ENCODE measurements at regions of chr2 and their contacts with region 1.

Region 1: GRCh38 chr2:176001916-176002687 is at the start of gene LNPK:
- DNase-seq: peak; percentile 84 to 95 (median 92)
- ATAC-seq: peak; percentile 88
- H3K4me3 ChIP-seq: peak within 1 kb of the TSS; percentile 69 to 79
- H3K4me3 Mint-ChIP-seq: peak within 1 kb of the TSS; percentile 90
- H3K27ac ChIP-seq: peak within 1 kb of the TSS; percentile 63 to 71
- H3K27ac Mint-ChIP-seq: peak within 1 kb of the TSS; percentile 97
- H3K4me1 ChIP-seq: peaks cover 10% of the 10 kb centered on the region
- H3K4me1 Mint-ChIP-seq: peaks cover 31% of the 10 kb centered on the region
- H3K27me3 ChIP-seq: no peaks in the 10 kb centered on the region
- H3K27me3 Mint-ChIP-seq: no peaks in the 10 kb centered on the region
- CTCF ChIP-seq: no peak
- total RNA-seq, gene LNPK: 16.9 TPM

Region 2: DNA sequence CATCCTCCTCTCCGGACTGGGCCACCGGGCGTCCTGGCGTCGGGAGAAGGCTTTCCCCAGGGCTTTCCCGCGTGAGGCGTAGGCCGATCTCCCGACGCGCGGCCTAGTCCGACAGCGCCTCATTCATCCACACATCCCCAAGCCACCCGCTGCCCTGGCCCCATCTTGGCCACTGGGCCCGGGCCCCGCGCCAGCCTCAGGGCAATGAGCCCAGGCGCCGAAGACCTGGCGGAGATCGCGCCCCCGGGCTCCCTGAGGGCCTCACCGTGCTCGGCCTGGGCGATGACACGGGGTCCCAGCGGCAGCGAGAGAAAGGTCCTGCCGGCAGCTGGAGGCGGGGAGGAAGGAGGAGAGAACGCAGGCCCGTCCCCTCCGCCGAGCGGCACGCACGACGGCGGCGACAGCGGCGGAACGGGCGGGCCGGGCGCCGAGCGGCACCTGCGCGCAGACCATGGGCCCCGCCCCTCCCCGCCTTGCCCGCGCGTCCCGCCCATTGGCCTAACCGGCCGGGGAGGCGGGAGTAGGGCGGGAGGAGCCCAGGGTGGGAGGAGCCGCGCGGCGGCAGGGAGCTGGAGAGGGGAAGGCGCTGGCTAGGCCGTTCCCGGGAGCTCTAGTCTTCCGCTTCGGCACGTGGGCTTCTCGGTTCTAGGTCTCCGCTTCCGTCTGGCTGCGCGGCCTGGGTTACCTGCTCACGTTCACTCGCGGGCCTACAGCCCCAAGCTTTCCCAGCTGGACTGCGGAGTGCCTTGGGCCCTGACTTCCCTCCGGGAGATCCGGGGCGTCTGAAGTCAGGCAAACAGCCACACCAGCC is 1753.7 kb before region 1 on chr2 and contains the start of gene OLA1:
- CTCF ChIA-PET with region 1: no interaction called
- POLR2A ChIA-PET with region 1: no interaction called
- intact Hi-C with region 1: loop called in 1 of 2 experiments (anchors 5 kb)
- DNase-seq: peak; percentile 90 to 98 (median 96)
- ATAC-seq: peak; percentile 96
- H3K4me3 ChIP-seq: peak within 1 kb of the TSS; percentile 78 to 94
- H3K4me3 Mint-ChIP-seq: peak within 1 kb of the TSS; percentile 84
- H3K27ac ChIP-seq: peak within 1 kb of the TSS; percentile 49 to 78
- H3K27ac Mint-ChIP-seq: peak within 1 kb of the TSS; percentile 80
- H3K4me1 ChIP-seq: peaks cover 6% of the 10 kb centered on the region
- H3K4me1 Mint-ChIP-seq: peaks cover 31% of the 10 kb centered on the region
- H3K27me3 ChIP-seq: no peaks in the 10 kb centered on the region
- H3K27me3 Mint-ChIP-seq: no peaks in the 10 kb centered on the region
- CTCF ChIP-seq: no peak
- total RNA-seq, gene OLA1: 35.3 to 38.8 TPM

Region 3: DNA sequence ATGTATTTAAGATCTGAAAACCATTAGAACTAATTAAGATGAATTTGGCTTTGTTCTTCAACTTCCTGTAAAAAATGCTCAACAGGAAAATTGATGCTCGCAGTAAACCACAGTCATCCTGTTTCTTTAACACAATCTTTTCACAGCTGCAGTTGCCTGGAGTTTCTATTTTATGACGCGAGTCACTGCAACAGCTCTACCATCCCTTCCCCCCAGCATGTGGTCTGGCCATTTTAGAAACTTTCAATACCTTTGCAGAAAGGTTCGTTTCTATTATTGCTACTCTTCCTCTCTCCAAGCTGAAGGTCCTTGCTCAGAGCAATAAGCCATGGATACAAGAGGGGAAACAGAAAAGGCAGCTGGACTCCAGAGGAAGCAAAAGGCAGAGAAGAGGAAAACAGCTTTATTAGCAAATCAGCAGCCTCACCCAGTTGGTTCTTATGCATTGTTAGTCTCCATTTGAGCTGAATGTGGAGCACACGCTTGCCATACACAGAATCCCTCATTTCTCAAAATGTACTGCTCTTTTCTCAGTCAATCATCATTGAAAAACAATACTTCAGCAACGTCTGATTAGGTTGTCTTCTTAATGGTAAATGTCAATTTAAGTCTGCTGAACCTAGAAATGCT is 1408.4 kb before region 1 on chr2:
- CTCF ChIA-PET with region 1: no interaction called
- POLR2A ChIA-PET with region 1: no interaction called
- intact Hi-C with region 1: loop called in 1 of 2 experiments (anchors 10 kb)
- DNase-seq: peak; percentile 34 to 95 (median 71)
- ATAC-seq: peak; percentile 67
- H3K4me3 ChIP-seq: peak overlapping the region; percentile 40 to 74
- H3K4me3 Mint-ChIP-seq: peak overlapping the region; percentile 87
- H3K27ac ChIP-seq: peak overlapping the region; percentile 65 to 91
- H3K27ac Mint-ChIP-seq: peak overlapping the region; percentile 99
- H3K4me1 ChIP-seq: peaks cover 46% of the 10 kb centered on the region
- H3K4me1 Mint-ChIP-seq: peaks cover 61% of the 10 kb centered on the region
- H3K27me3 ChIP-seq: no peaks in the 10 kb centered on the region
- H3K27me3 Mint-ChIP-seq: no peaks in the 10 kb centered on the region
- CTCF ChIP-seq: no peak

Region 4: GRCh38 chr2:175948191-175948590 is 53.9 kb before region 1 on chr2:
- CTCF ChIA-PET with region 1: no interaction called
- POLR2A ChIA-PET with region 1: no interaction called
- intact Hi-C with region 1: loop called in 1 of 2 experiments (anchors 10 kb)
- DNase-seq: no peak
- ATAC-seq: no peak
- H3K4me3 ChIP-seq: no peak overlapping the region
- H3K4me3 Mint-ChIP-seq: no peak overlapping the region
- H3K27ac ChIP-seq: no peak overlapping the region
- H3K27ac Mint-ChIP-seq: no peak overlapping the region
- H3K4me1 ChIP-seq: no peaks in the 10 kb centered on the region
- H3K4me1 Mint-ChIP-seq: no peaks in the 10 kb centered on the region
- H3K27me3 ChIP-seq: no peaks in the 10 kb centered on the region
- H3K27me3 Mint-ChIP-seq: no peaks in the 10 kb centered on the region
- CTCF ChIP-seq: no peak

Region 5: DNA sequence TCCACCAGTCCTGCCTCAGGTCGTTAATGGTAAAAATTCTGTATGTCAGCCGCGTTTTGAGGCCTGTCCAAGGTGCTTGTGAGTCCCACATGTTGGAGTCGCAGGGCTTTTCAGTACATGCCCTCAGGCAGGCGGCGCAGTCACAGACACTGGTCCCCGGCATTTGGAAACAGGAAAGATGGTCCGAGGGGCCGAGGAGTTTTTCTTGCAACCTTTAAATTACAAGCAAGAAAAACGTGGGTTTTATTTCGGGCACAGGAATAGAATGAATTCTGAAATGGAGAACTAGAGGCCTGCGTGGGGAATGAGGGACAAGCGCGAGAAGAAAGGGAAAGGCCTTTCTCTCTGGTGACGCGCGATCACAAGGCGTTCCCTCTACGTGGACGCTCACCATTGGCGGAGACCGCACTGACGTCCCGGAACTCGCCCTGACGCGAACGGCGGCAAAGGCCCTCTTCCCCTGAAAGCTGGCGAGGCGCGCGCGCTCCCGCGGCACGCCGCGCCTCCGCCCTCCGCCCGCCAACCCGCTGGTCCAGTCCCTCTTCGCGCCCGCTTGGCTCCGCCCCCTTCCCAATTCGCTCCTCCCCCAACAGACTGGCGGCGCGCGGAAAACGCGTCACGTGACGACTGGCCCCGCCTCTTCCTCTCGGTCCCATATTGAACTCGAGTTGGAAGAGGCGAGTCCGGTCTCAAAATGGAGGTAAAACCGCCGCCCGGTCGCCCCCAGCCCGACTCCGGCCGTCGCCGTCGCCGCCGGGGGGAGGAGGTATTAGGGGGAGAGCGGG is 1210.2 kb after region 1 on chr2 and contains the start of gene HNRNPA3:
- CTCF ChIA-PET with region 1: no interaction called
- POLR2A ChIA-PET with region 1: no interaction called
- intact Hi-C with region 1: loop called in 1 of 2 experiments (anchors 5 kb)
- DNase-seq: peak; percentile 99 to 100 (median 100)
- ATAC-seq: peak; percentile 86
- H3K4me3 ChIP-seq: peak within 1 kb of the TSS; percentile 69 to 83
- H3K4me3 Mint-ChIP-seq: peak within 1 kb of the TSS; percentile 88
- H3K27ac ChIP-seq: peak within 1 kb of the TSS; percentile 99 to 100
- H3K27ac Mint-ChIP-seq: peak within 1 kb of the TSS; percentile 100
- H3K4me1 ChIP-seq: peaks cover 50% of the 10 kb centered on the region
- H3K4me1 Mint-ChIP-seq: peaks cover 51% of the 10 kb centered on the region
- H3K27me3 ChIP-seq: no peaks in the 10 kb centered on the region
- H3K27me3 Mint-ChIP-seq: no peaks in the 10 kb centered on the region
- CTCF ChIP-seq: no peak
- total RNA-seq, gene HNRNPA3: 144 to 160 TPM

Region 6: DNA sequence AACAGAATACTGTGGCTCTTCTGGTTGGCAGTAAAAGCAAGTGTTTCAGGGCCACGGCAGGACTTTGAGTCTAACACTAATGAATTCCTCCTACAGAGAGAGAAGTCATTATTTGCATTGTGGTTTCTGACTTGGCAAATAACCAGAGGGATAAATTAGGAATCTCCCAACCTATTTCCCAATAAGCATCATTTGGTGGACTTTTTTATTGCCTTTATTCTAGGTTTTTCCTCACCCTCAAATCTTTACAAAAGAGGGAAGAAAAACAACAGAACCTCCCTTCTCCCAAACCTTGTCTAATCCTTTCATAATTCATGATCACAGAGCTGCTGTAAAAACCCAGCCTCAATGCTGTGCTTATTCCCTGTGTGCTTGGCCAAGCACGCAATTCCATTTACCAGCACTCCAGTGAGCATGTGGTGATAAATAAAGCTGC is 1570.2 kb after region 1 on chr2:
- CTCF ChIA-PET with region 1: no interaction called
- POLR2A ChIA-PET with region 1: no interaction called
- intact Hi-C with region 1: no loop called
- DNase-seq: no peak
- ATAC-seq: no peak
- H3K4me3 ChIP-seq: no peak overlapping the region
- H3K4me3 Mint-ChIP-seq: no peak overlapping the region
- H3K27ac ChIP-seq: no peak overlapping the region
- H3K27ac Mint-ChIP-seq: no peak overlapping the region
- H3K4me1 ChIP-seq: no peaks in the 10 kb centered on the region
- H3K4me1 Mint-ChIP-seq: no peaks in the 10 kb centered on the region
- H3K27me3 ChIP-seq: no peaks in the 10 kb centered on the region
- H3K27me3 Mint-ChIP-seq: peaks cover 12% of the 10 kb centered on the region
- CTCF ChIP-seq: no peak

Region 7: DNA sequence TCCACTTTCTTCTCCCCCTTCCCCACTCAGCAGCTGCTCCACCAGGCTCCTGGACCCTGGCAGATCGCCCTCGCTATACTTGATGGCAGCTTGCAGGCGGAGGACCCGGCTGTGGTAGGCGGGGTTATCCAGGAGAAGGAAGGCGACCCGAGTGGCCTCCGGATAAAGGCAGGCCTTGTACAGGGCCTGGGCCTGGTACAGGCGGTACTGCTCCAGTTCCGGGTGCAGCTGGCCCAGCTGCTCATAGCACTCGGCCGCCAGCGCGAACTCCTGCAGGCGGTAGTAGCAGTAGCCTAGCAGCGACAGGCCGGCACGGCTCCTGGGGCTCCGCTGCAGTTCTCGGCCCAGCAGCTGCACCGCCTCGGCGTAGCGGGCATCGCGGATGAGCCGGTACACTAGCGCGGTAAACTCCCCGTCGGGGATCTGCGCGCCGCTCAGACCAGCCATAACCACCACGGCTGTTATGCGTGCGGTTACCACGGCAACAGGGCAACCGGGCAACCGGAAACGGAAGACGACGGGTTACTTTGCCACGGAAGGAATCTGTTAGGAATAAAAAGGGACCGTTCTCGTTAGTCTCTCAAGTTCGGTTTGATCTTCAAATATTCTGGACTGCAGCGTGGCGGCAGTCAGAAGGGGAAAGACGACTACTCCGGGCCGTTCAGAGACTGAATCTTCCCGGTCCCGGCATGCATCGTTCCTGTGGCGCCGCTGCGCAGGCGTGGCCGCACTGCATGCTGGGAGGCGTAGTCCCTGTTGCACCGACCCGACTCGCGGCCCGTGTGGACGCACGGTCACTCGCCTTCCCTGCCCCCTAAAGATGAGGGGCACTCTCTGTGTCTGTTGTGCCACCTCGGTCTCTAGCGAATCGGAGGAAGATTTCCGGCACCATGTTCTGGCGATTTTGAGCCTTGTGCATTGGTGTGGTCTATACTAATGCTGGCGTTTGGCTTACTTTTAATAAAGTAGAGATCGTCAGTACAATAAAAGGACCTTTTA is 1616.5 kb after region 1 on chr2:
- CTCF ChIA-PET with region 1: no interaction called
- POLR2A ChIA-PET with region 1: no interaction called
- intact Hi-C with region 1: loop called in 1 of 2 experiments (anchors 2 kb)
- DNase-seq: peak; percentile 80 to 96 (median 91)
- ATAC-seq: peak; percentile 89
- H3K4me3 ChIP-seq: peak overlapping the region; percentile 89 to 93
- H3K4me3 Mint-ChIP-seq: peak overlapping the region; percentile 97
- H3K27ac ChIP-seq: peak overlapping the region; percentile 97 to 99
- H3K27ac Mint-ChIP-seq: peak overlapping the region; percentile 98
- H3K4me1 ChIP-seq: peaks cover 8% of the 10 kb centered on the region
- H3K4me1 Mint-ChIP-seq: peaks cover 7% of the 10 kb centered on the region
- H3K27me3 ChIP-seq: no peaks in the 10 kb centered on the region
- H3K27me3 Mint-ChIP-seq: no peaks in the 10 kb centered on the region
- CTCF ChIP-seq: no peak

Measured in CD8-positive, alpha-beta T cell (primary cell).